ENCODE measurements at regions of chr3 and their contacts with region 1.

Region 1: DNA sequence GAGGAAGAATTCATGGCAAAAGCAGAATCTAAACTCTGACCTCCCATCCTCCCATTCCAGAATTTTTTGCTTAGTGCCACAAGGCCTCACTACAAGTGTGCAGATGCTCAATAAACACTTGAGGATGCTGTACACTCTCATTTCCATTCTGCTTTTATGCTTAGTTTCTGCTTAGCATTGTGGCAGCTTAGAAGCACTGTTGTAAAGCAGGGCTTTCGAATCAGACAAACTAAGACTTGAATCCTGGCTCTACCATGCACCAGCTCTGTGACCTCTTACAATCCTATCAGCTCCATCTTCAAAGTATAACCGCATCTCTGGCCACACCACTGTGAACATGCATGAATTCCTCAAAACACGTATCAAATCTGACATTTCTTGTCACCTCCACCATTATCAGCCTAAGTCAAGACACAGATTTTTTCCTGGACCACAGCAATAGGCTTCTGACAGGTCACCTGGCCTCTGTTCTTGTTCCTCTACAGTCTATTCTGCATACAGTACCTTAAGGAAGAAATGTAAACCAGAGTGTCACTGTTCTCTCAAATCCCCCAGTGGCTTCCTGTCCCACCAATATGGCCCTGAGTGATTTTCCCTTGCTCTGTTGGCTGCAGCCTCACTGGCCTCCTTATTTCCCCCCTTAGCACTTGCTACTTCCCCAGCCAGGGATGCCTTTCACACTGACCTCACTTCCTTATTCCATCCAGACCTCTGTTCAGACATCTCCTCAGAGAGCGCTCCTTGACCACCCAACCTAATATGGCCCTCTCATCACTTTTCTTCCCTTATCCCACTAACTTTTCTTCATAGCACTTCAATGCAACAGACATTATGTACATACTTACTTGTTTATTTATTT is 8.1 kb upstream of the PHC3 start:
- DNase-seq: no peak
- ATAC-seq: peak; percentile 56
- H3K4me3 ChIP-seq: no peak overlapping the region
- H3K27ac ChIP-seq: no peak overlapping the region
- H3K4me1 ChIP-seq: peaks cover 4% of the 10 kb centered on the region; the same call in 1 of the 2 replicates
- H3K27me3 ChIP-seq: no peaks in the 10 kb centered on the region
- CTCF ChIP-seq: no peak
- EP300 ChIP-seq: no peak
- POLR2A ChIP-seq: no peak
- RAD21 ChIP-seq: no peak

Region 2: DNA sequence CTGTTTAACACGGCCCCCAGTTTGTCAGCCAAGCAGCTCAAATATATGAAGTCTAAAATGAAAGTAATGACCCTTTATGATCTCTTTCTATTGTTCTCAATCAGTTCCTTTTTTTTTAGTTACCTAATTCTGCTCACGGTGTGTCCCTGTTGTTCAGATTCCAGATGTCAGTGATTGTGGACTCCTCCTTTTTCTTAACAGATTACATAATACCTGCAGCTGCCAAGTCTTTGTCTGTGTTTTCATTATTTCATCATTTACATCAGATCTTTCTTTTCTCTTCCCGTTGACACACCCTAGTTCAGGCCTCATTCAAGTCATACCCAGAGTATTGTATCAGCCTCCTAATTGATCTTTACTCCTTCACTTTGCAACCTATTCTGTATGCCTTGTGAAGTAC is 111.8 kb after region 1 on chr3:
- CTCF ChIA-PET with region 1: no interaction called
- POLR2A ChIA-PET with region 1: no interaction called
- RAD21 ChIA-PET with region 1: no interaction called
- SMC1A ChIA-PET with region 1: no interaction called
- in situ Hi-C with region 1: no loop called
- intact Hi-C with region 1: loop called (anchors 5 kb)
- DNase-seq: no peak
- ATAC-seq: no peak
- H3K4me3 ChIP-seq: no peak overlapping the region
- H3K27ac ChIP-seq: no peak overlapping the region
- H3K4me1 ChIP-seq: no peaks in the 10 kb centered on the region
- H3K27me3 ChIP-seq: no peaks in the 10 kb centered on the region
- CTCF ChIP-seq: no peak
- EP300 ChIP-seq: no peak
- POLR2A ChIP-seq: no peak
- RAD21 ChIP-seq: no peak

Measured in GM12878 (cell line).